ENCODE measurements at regions of chr20 and their contacts with region 1.

Region 1: GRCh38 chr20:24565835-24566351 is 96.5 kb downstream of the SYNDIG1 start:
- DNase-seq: no peak
- H3K4me3 ChIP-seq: no peak overlapping the region
- H3K27ac ChIP-seq: peak overlapping the region in 1 of 59 donors; percentile 9
- H3K27me3 ChIP-seq: no peaks in the 10 kb centered on the region
- CTCF ChIP-seq: no peak

Region 2: GRCh38 chr20:24522452-24523330 is 43.2 kb before region 1 on chr20:
- intact Hi-C with region 1: loop called in 1 of 2 experiments (anchors 5 kb)
- DNase-seq: no peak
- H3K4me3 ChIP-seq: no peak overlapping the region
- H3K27ac ChIP-seq: peak overlapping the region in 55 of 59 donors; percentile 3 to 91 (median 76)
- H3K27me3 ChIP-seq: no peaks in the 10 kb centered on the region
- CTCF ChIP-seq: no peak

Measured in dorsolateral prefrontal cortex (tissue), 120 donors.